ENCODE measurements at regions of chr6 and their contacts with region 1.

Region 1: GRCh38 chr6:165439928-165440554 is 130.6 kb upstream of the C6orf118 start:
- DNase-seq: no peak
- ATAC-seq: peak; percentile 47
- H3K4me3 Mint-ChIP-seq: no peak overlapping the region
- H3K27ac Mint-ChIP-seq: no peak overlapping the region
- H3K4me1 Mint-ChIP-seq: no peaks in the 10 kb centered on the region
- H3K27me3 Mint-ChIP-seq: no peaks in the 10 kb centered on the region
- CTCF ChIP-seq: no peak

Region 2: GRCh38 chr6:163872335-163872734 is 1567.7 kb before region 1 on chr6:
- CTCF ChIA-PET with region 1: no interaction called
- POLR2A ChIA-PET with region 1: no interaction called
- DNase-seq: no peak
- ATAC-seq: no peak
- H3K4me3 Mint-ChIP-seq: no peak overlapping the region
- H3K27ac Mint-ChIP-seq: no peak overlapping the region
- H3K4me1 Mint-ChIP-seq: peaks cover 6% of the 10 kb centered on the region
- H3K27me3 Mint-ChIP-seq: no peaks in the 10 kb centered on the region
- CTCF ChIP-seq: no peak

Region 3: GRCh38 chr6:165417278-165417865 is 22.7 kb before region 1 on chr6:
- CTCF ChIA-PET with region 1: no interaction called
- POLR2A ChIA-PET with region 1: no interaction called
- DNase-seq: no peak
- ATAC-seq: no peak
- H3K4me3 Mint-ChIP-seq: no peak overlapping the region
- H3K27ac Mint-ChIP-seq: no peak overlapping the region
- H3K4me1 Mint-ChIP-seq: peaks cover 8% of the 10 kb centered on the region
- H3K27me3 Mint-ChIP-seq: no peaks in the 10 kb centered on the region
- CTCF ChIP-seq: no peak

Region 4: DNA sequence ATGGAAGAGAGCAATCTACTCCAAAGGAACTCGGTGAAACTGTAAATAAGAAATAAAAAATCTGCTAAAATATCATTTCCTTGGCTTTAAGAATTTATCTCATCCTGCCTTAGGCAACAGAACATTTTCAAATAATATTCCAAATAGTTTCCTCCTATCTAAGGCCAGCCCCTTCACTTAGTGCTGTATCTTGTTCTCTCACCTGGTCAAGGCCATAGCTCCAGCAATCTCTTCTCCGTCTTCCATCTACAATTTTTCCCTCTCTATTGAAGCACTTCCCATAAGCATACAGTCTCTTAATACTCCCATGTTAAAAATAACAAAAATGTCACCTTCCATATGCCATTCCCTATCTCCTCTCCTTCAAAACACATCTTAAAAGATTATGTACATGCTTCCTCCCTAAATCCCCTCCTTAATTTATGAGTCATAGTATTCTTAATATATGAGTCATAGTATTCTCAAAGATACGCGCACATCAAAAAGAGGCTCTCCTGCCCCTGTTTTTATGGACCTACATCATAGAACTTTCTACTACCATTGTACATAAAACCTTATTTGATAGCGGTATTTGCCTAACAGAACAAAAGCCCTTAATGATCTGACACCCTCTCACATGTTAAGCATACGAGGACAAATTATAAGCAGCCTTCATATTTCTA is 76.1 kb after region 1 on chr6:
- CTCF ChIA-PET with region 1: interaction called, 10 read pairs
- POLR2A ChIA-PET with region 1: no interaction called
- DNase-seq: no peak
- ATAC-seq: no peak
- H3K4me3 Mint-ChIP-seq: no peak overlapping the region
- H3K27ac Mint-ChIP-seq: no peak overlapping the region
- H3K4me1 Mint-ChIP-seq: peaks cover 2% of the 10 kb centered on the region
- H3K27me3 Mint-ChIP-seq: no peaks in the 10 kb centered on the region
- CTCF ChIP-seq: no peak

Region 5: DNA sequence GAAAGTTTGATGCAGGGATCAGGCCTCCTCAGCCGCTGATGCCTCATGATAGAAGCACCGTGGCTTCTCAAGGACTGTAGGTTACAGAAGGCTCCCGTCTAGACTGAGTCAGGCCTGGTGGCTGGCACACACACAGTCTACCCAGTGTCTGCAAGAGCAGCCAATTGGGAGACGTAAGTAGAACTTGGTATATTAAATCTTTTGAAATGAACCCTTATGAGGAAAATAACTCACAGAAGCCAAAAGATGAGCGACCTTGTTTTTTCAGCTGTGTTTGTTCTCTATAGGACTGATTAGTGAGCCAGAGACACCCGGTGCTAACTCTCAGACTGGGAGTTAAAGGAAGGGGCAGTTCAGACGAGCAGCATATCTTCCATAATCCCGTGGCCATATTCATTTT is 228.9 kb after region 1 on chr6:
- CTCF ChIA-PET with region 1: interaction called, 10 read pairs
- POLR2A ChIA-PET with region 1: no interaction called
- DNase-seq: no peak
- ATAC-seq: peak; percentile 71
- H3K4me3 Mint-ChIP-seq: no peak overlapping the region
- H3K27ac Mint-ChIP-seq: no peak overlapping the region
- H3K4me1 Mint-ChIP-seq: peaks cover 68% of the 10 kb centered on the region
- H3K27me3 Mint-ChIP-seq: peaks cover 30% of the 10 kb centered on the region
- CTCF ChIP-seq: no peak

Region 6: DNA sequence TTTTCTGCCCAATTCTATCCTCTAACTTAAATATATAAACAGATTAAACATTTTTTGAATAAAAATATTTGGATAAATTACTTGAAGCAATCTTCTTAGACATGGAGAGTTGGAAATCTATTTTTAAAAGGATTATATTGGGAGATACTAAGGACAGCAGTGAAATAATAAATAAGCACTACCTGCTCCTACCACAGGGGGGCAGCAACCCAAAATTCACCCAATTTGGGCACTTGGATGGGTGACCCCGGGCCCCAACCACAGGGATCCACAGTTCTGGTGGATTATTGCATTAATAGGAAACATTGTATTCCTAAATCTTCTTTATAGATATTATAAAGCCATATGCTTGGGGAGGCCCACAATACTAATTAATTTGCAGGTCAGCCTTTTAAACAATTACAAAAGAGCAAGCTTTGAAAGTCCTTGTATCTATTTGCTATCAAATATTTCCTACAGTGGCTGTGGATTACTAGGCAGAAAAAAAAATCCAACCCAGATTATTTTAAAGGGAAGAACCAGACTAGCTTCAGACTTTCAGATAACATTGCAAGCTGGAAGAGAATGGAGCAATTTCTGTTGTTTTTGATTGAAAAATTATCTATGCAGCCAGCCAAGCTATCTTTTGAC is 289.4 kb after region 1 on chr6:
- CTCF ChIA-PET with region 1: interaction called, 15 read pairs
- POLR2A ChIA-PET with region 1: no interaction called
- DNase-seq: peak; percentile 71
- ATAC-seq: peak; percentile 67
- H3K4me3 Mint-ChIP-seq: no peak overlapping the region
- H3K27ac Mint-ChIP-seq: no peak overlapping the region
- H3K4me1 Mint-ChIP-seq: peaks cover 10% of the 10 kb centered on the region
- H3K27me3 Mint-ChIP-seq: no peaks in the 10 kb centered on the region; the same call in 1 of the 2 replicates
- CTCF ChIP-seq: peak; percentile 83

Region 7: GRCh38 chr6:165850434-165851019 is 410.5 kb after region 1 on chr6:
- CTCF ChIA-PET with region 1: interaction called, 20 read pairs
- POLR2A ChIA-PET with region 1: no interaction called
- DNase-seq: peak; percentile 77
- ATAC-seq: peak; percentile 33; the same call in 1 of the 2 replicates
- H3K4me3 Mint-ChIP-seq: peak overlapping the region; percentile 46; the same call in 1 of the 2 replicates
- H3K27ac Mint-ChIP-seq: no peak overlapping the region
- H3K4me1 Mint-ChIP-seq: peaks cover 38% of the 10 kb centered on the region
- H3K27me3 Mint-ChIP-seq: peaks cover 49% of the 10 kb centered on the region
- CTCF ChIP-seq: peak; percentile 93

Region 8: GRCh38 chr6:165858586-165858985 is 418.5 kb after region 1 on chr6:
- CTCF ChIA-PET with region 1: interaction called, 25 read pairs
- POLR2A ChIA-PET with region 1: no interaction called
- DNase-seq: no peak
- ATAC-seq: peak; percentile 37
- H3K4me3 Mint-ChIP-seq: no peak overlapping the region
- H3K27ac Mint-ChIP-seq: no peak overlapping the region
- H3K4me1 Mint-ChIP-seq: peaks cover 25% of the 10 kb centered on the region
- H3K27me3 Mint-ChIP-seq: peaks cover 33% of the 10 kb centered on the region
- CTCF ChIP-seq: 0 out of 2 replicates have a peak, but pooled peaks have one; percentile 16